Caco-2 (cell line): ENCODE measurements at regions of chr3 and their contacts with region 1.

Region 1: GRCh38 chr3:194204042-194204987 is 68.4 kb downstream of the HES1 start:
- DNase-seq: peak in 1 of 2 experiments; percentile 45
- H3K4me3 ChIP-seq: peak overlapping the region; percentile 54
- H3K4me3 Mint-ChIP-seq: peak overlapping the region; percentile 92
- H3K27ac Mint-ChIP-seq: no peak overlapping the region
- H3K4me1 ChIP-seq: peaks cover 15% of the 10 kb centered on the region; the same call in 1 of the 2 replicates
- H3K4me1 Mint-ChIP-seq: peaks cover 5% of the 10 kb centered on the region
- H3K27me3 ChIP-seq: no peaks in the 10 kb centered on the region
- H3K27me3 Mint-ChIP-seq: no peaks in the 10 kb centered on the region
- CTCF ChIP-seq: no peak

Region 2: DNA sequence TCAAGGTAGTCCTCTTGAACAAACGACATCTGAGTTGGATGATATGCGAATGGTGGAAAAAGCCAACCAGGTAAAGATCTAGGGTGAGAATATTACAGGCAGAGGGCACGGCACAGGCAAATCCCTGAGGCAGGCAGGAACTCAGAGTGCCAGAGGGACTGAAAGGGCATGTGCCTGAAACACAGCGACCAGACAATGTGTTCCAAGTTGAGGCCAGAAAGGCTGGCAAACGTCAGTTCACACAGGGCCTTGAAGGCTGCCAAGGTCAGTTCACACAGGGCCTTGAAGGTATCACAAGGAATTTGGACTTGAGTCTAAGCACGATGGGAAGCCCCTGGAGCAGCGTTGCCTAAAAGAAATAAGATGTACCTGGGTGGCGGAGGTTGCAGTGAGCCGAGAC is 48.2 kb before region 1 on chr3:
- CTCF ChIA-PET with region 1: no interaction called
- POLR2A ChIA-PET with region 1: no interaction called
- intact Hi-C with region 1: no loop called
- DNase-seq: no peak
- H3K4me3 ChIP-seq: no peak overlapping the region
- H3K4me3 Mint-ChIP-seq: no peak overlapping the region
- H3K27ac Mint-ChIP-seq: no peak overlapping the region
- H3K4me1 ChIP-seq: peaks cover 19% of the 10 kb centered on the region
- H3K4me1 Mint-ChIP-seq: peaks cover 20% of the 10 kb centered on the region
- H3K27me3 ChIP-seq: no peaks in the 10 kb centered on the region
- H3K27me3 Mint-ChIP-seq: no peaks in the 10 kb centered on the region
- CTCF ChIP-seq: no peak

Region 3: GRCh38 chr3:194166682-194167479 is 37.4 kb before region 1 on chr3:
- CTCF ChIA-PET with region 1: no interaction called
- POLR2A ChIA-PET with region 1: no interaction called
- intact Hi-C with region 1: loop called (anchors 5 kb)
- DNase-seq: no peak
- H3K4me3 ChIP-seq: no peak overlapping the region
- H3K4me3 Mint-ChIP-seq: peak overlapping the region; percentile 44
- H3K27ac Mint-ChIP-seq: no peak overlapping the region
- H3K4me1 ChIP-seq: peaks cover 12% of the 10 kb centered on the region; the same call in 1 of the 2 replicates
- H3K4me1 Mint-ChIP-seq: peaks cover 15% of the 10 kb centered on the region
- H3K27me3 ChIP-seq: no peaks in the 10 kb centered on the region
- H3K27me3 Mint-ChIP-seq: no peaks in the 10 kb centered on the region
- CTCF ChIP-seq: no peak